CD8-positive, alpha-beta memory T cell (primary cell): ENCODE measurements at regions of chr12 and their contacts with region 1.

Region 1: GRCh38 chr12:62603061-62603810 is 136.6 kb downstream of the MON2 start:
- DNase-seq: peak; percentile 68 to 88 (median 76)
- H3K4me3 ChIP-seq: peak overlapping the region; percentile 85
- H3K4me3 Mint-ChIP-seq: peak overlapping the region; percentile 87 to 97 (median 95)
- H3K27ac ChIP-seq: peak overlapping the region; percentile 99
- H3K27ac Mint-ChIP-seq: peak overlapping the region; percentile 95 to 100 (median 100)
- H3K4me1 ChIP-seq: peaks cover 26% of the 10 kb centered on the region
- H3K4me1 Mint-ChIP-seq: peaks cover 41 to 50% (median 44%) of the 10 kb centered on the region in 3 donors
- H3K27me3 ChIP-seq: no peaks in the 10 kb centered on the region
- H3K27me3 Mint-ChIP-seq: no peaks in the 10 kb centered on the region

Region 2: GRCh38 chr12:62259993-62260732 is 343.1 kb before region 1 on chr12 and contains the start of gene USP15:
- CTCF ChIA-PET with region 1: interaction called, 3 read pairs
- POLR2A ChIA-PET with region 1: interaction called, 10 read pairs
- DNase-seq: peak; percentile 94 to 98 (median 97)
- H3K4me3 ChIP-seq: peak within 1 kb of the TSS; percentile 93
- H3K4me3 Mint-ChIP-seq: peak within 1 kb of the TSS; percentile 98 to 99 (median 99)
- H3K27ac ChIP-seq: peak within 1 kb of the TSS; percentile 94
- H3K27ac Mint-ChIP-seq: peak within 1 kb of the TSS; percentile 94 to 100 (median 99)
- H3K4me1 ChIP-seq: peaks cover 65% of the 10 kb centered on the region
- H3K4me1 Mint-ChIP-seq: peaks cover 57 to 71% (median 59%) of the 10 kb centered on the region in 3 donors
- H3K27me3 ChIP-seq: no peaks in the 10 kb centered on the region
- H3K27me3 Mint-ChIP-seq: peaks cover 0 to 3% of the 10 kb centered on the region in 2 donors
- total RNA-seq, gene USP15: 90.9 to 99.0 TPM

Region 3: GRCh38 chr12:62466594-62467491 is 136.4 kb before region 1 on chr12 and contains the start of gene MON2:
- CTCF ChIA-PET with region 1: interaction called, 10 read pairs
- POLR2A ChIA-PET with region 1: interaction called, 18 read pairs
- DNase-seq: peak; percentile 85 to 92 (median 86)
- H3K4me3 ChIP-seq: peak within 1 kb of the TSS; percentile 82
- H3K4me3 Mint-ChIP-seq: peak within 1 kb of the TSS; percentile 83 to 99 (median 95)
- H3K27ac ChIP-seq: peak within 1 kb of the TSS; percentile 96
- H3K27ac Mint-ChIP-seq: peak within 1 kb of the TSS; percentile 84 to 99 (median 97)
- H3K4me1 ChIP-seq: peaks cover 31% of the 10 kb centered on the region
- H3K4me1 Mint-ChIP-seq: peaks cover 22 to 37% (median 33%) of the 10 kb centered on the region in 3 donors
- H3K27me3 ChIP-seq: no peaks in the 10 kb centered on the region
- H3K27me3 Mint-ChIP-seq: no peaks in the 10 kb centered on the region
- total RNA-seq, gene MON2: 27.9 to 29.7 TPM

Region 4: DNA sequence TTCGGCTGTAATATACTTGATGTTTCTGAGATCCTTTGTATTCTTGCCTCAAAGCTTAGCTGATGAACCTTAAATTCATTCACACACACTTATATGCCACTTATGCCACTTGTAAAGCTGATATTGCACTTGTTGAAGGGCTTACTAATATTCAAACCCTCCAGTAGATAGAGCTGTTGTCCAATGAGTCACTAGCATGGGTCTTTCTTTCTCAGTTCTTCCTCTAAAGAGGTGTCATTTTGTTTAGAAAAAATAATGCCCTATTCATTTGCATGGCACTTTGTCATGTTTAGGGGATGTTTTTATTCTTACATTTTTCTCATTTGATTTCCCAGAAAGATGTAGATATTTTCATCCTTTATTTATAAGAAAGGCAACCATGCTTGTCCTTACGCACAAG is 80.3 kb before region 1 on chr12:
- CTCF ChIA-PET with region 1: no interaction called
- POLR2A ChIA-PET with region 1: no interaction called
- DNase-seq: no peak
- H3K4me3 ChIP-seq: no peak overlapping the region
- H3K4me3 Mint-ChIP-seq: no peak overlapping the region
- H3K27ac ChIP-seq: no peak overlapping the region
- H3K27ac Mint-ChIP-seq: peak overlapping the region in 2 of 8 donors; percentile 35 to 44
- H3K4me1 ChIP-seq: peaks cover under 1% of the 10 kb centered on the region
- H3K4me1 Mint-ChIP-seq: peaks cover 7 to 19% (median 16%) of the 10 kb centered on the region in 3 donors
- H3K27me3 ChIP-seq: no peaks in the 10 kb centered on the region
- H3K27me3 Mint-ChIP-seq: no peaks in the 10 kb centered on the region

Region 5: DNA sequence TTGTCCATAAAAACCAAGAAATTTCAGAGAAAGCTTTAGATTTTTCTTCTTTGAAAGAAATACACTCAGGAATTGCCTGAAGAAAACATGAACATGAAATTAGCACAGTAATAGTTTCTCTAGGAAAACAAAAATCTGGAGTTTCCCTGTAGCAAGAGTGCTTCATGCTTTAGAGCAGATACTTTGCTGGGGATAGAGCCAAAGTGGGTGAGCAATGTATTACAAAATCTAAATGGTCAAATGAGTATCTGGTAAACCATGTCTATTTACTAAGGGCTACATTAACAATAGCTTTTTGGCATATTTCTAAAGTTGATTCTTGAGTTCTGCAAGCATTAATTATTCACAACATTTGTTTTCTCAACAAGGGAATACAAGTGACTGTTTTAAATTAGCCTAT is 521.5 kb after region 1 on chr12:
- CTCF ChIA-PET with region 1: no interaction called
- POLR2A ChIA-PET with region 1: no interaction called
- DNase-seq: no peak
- H3K4me3 ChIP-seq: no peak overlapping the region
- H3K4me3 Mint-ChIP-seq: no peak overlapping the region
- H3K27ac ChIP-seq: no peak overlapping the region
- H3K27ac Mint-ChIP-seq: no peak overlapping the region
- H3K4me1 ChIP-seq: no peaks in the 10 kb centered on the region
- H3K4me1 Mint-ChIP-seq: no peaks in the 10 kb centered on the region
- H3K27me3 ChIP-seq: no peaks in the 10 kb centered on the region
- H3K27me3 Mint-ChIP-seq: peaks cover 3 to 5% of the 10 kb centered on the region in 2 donors